Dendritic cell treated with granulocyte-macrophage colony-stimulating factor and Interleukin-4, amounts not matched to agents 40 ng/mL and 50 ng/mL, for 4 days (primary cell): ENCODE measurements at regions of chr9 and their contacts with region 1.

Region 1: DNA sequence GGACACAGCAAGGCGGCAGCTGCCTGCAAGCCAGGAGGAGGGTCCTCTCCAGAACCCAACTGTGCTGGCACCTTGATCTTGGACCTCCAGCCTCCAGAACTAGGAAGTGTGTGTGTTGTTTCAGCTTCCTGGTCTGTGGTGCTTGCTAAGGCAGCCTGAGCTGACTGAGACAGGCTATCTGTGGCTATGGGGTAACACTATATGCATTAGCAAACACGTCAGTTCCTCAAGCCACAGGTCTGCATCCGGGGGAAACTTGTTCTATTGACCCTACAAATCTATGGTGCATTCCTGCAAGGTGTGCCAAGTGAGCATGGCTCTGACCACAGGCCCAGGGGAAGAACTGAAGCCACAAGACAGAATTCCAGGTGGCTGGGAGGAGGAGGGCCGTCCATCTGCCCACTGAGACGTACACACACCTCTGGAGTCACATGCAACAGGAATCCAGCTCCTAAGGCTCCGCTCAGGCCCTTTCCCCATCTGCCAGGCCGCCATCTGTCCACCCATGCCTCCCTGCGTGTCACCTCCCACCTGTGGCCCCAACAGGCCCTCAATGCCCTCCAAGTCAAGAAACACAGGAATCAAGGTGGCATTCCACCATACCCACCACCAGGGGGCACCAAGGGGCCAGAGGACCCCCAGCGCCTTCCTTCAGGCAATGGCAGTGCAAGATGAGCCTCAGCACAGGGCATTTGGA is 174.9 kb downstream of the ROR2 start:
- H3K4me3 Mint-ChIP-seq: no peak overlapping the region
- H3K27ac Mint-ChIP-seq: peak overlapping the region; percentile 71
- H3K4me1 Mint-ChIP-seq: peaks cover 65% of the 10 kb centered on the region
- H3K27me3 Mint-ChIP-seq: peaks cover 9% of the 10 kb centered on the region

Region 2: DNA sequence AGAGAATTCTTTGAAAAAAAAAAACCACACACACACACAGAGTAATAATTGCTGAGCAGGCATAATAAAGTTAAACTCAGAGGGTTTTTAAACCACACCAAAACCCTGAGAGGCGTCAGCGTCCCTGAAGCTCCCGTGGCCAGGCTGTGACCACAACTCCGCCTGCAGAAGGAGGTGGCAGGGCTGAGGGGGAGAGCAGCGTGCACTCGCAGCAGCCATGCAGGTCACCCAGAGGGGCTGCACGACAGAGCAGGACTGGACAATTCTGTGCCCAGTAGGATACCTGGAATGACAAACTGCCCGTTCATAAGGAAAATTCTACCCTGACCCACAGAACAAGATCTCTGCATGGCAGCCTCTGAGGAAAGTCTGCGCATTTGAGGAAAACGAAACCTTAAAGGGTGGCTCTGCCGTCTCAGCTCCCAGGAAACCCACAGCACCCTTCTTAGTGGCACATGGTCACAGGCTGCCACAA is 130.9 kb after region 1 on chr9:
- intact Hi-C with region 1: loop called (anchors 10 kb)
- H3K4me3 Mint-ChIP-seq: no peak overlapping the region
- H3K27ac Mint-ChIP-seq: no peak overlapping the region
- H3K4me1 Mint-ChIP-seq: peaks cover 20% of the 10 kb centered on the region
- H3K27me3 Mint-ChIP-seq: peaks cover 10% of the 10 kb centered on the region

Region 3: DNA sequence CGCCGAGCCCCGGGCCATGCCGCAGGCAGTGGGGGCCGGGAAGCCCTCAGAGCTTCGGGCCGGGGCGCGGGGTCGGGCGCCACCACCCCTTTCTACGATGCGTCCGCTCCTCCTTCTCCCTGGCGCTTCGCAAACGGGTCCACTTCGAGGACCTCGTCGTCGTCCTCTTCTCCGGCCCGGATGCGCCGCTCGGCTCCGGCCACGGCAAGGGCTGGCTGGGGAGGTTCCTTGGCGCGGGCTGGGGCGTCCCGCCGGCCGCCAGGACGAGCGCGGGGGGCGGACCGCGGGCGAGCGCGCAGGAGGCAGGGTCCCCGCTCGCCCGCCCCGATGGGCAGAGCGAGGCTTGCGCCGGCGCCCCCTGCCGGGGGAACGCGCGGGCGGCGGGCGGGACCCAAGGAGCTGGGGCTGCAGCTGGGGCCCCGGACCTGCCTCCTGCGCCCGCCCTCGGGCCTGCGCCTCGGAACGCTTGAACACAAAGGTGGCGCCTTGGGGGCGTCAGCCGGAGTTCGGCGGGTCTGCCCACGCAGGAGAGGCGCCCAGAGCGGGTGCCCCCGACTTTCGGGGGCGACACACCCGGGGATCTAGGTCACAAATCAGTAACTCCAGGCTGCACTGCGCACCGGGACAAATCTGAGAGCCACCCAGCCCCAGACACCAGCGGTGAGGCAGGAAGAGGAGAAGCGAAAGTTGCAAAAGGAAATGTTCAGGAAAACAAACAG is 174.9 kb after region 1 on chr9 and contains the start of gene ROR2:
- intact Hi-C with region 1: loop called (anchors 2 kb)
- H3K4me3 Mint-ChIP-seq: peak within 1 kb of the TSS; percentile 57
- H3K27ac Mint-ChIP-seq: no peak within 1 kb of the TSS
- H3K4me1 Mint-ChIP-seq: peaks cover 10% of the 10 kb centered on the region
- H3K27me3 Mint-ChIP-seq: peaks cover 83% of the 10 kb centered on the region